ENCODE measurements at regions of chr7 and their contacts with region 1.

Region 1: DNA sequence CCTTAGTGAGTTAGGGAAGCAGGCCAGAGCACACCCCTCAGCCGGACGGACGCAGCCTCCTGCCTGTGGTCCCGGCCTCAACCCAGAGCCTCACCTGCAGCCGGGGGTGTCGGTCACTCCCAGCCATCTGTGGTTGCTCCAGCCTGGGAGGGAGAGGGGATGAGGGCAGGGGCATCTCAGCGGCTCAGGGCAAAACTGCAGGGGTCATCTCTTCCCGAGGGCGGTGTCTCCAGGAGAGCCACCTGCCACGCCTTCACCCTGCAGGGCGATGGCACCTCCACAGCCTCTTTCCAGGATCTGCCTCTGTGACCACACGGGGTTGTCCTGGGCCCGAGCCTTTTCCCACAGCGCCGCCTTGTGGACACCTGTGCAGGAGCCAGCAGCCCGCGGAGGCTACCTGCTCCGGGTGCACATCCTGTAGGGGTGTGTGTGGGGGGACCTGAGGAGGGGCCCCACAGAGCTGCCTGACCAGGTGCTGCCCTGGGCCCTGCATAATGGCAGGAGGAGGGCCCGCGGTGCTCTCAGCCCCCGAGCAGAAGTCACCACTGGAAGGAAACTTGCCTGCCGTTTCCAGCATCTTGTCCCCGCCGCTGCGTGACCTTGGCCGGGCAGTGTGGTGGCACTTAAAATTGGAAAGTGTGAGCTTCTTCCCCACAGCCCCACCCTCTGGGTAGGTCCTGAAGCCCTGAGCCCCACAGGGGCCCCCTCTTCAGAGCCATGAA is 21.6 kb upstream of the AP5Z1 start:
- DNase-seq: no peak
- H3K4me3 ChIP-seq: no peak overlapping the region
- H3K27ac ChIP-seq: peak overlapping the region; percentile 16
- H3K4me1 ChIP-seq: peaks cover 20% of the 10 kb centered on the region
- H3K27me3 ChIP-seq: no peaks in the 10 kb centered on the region
- CTCF ChIP-seq: peak; percentile 83 to 89 (median 85)
- POLR2A ChIP-seq: no peak

Region 2: DNA sequence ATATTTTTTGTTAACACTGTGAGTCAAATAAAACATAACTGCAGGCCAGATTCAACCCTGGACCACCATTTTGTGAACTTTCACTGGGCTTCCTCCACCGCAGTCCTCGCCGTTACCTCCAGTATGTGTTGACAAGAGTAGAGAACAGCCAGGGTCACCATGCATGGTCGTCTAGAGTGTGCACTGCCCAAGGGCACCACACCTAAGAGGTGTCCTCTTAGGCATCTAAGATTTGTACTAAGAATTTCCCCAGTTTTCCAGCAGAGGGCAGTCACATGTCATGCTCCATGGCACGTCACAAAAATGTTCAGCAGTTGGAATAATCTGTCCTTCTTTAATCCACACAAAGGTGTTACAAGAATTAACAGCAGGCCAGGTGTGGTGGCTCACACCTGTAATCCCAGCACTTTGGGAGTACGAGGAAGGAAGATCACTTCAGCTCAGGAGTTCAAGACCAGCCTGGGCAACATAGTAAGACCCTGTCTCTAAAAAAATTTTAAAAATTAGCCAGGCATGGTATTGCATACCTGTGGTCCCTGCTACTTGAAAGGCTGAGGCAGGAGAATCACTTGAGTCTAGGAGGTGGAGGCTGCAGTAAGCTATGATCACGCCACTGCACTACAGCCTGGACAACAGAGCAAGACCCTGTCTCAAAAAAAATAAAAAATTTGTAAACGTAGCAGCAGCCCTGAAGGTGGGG is 143.0 kb before region 1 on chr7:
- intact Hi-C with region 1: loop called (anchors 10 kb)
- DNase-seq: no peak
- H3K4me3 ChIP-seq: no peak overlapping the region
- H3K27ac ChIP-seq: no peak overlapping the region
- H3K4me1 ChIP-seq: peaks cover 13% of the 10 kb centered on the region
- H3K27me3 ChIP-seq: no peaks in the 10 kb centered on the region
- CTCF ChIP-seq: peak; percentile 63 to 93 (median 72)
- POLR2A ChIP-seq: no peak

Region 3: DNA sequence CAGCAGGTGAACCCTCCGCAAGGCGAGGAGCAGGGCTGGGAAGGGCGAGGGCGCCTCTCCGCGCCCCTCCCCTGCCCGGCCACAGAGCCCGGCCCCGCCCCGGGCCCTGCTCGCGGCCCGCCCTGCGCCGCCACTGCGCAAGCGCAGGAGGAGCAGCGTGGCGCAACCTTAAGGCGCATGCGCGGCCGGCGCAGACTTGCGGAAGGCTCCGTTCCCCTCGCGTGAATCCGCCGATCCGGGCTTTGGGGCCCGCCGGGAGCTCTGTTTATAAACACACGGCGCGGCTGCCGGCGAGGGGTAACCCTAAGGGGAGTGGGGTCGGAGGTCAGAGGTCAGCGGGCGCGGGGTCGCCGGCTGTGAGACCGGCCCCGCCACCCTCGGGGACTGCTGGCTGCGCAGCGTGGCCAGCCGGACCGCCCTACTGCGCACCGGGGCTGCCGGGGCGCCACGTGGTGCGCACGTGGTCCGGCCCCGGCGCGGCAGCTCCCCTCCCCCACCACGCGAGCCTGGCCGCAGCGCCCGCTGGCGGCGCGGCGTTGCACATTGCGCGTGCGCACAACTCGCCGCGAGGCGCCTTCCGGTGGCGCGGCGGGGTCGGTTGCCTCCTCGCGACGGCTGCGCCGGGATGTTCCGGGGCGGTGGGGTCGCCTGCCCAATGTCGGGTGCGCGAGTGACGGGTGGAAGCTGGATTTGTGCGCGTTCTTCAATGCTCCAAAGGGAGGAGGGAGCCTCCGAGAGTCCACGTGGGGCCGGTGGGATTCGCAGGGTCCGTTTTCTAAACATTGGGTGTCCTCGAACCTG is 112.0 kb before region 1 on chr7:
- intact Hi-C with region 1: loop called (anchors 5 kb)
- DNase-seq: no peak
- H3K4me3 ChIP-seq: peak overlapping the region; percentile 60
- H3K27ac ChIP-seq: peak overlapping the region; percentile 86
- H3K4me1 ChIP-seq: peaks cover 16% of the 10 kb centered on the region
- H3K27me3 ChIP-seq: no peaks in the 10 kb centered on the region
- CTCF ChIP-seq: peak in 2 of 3 experiments; percentile 20 to 41
- POLR2A ChIP-seq: peak in 1 of 2 donors; percentile 75

Region 4: DNA sequence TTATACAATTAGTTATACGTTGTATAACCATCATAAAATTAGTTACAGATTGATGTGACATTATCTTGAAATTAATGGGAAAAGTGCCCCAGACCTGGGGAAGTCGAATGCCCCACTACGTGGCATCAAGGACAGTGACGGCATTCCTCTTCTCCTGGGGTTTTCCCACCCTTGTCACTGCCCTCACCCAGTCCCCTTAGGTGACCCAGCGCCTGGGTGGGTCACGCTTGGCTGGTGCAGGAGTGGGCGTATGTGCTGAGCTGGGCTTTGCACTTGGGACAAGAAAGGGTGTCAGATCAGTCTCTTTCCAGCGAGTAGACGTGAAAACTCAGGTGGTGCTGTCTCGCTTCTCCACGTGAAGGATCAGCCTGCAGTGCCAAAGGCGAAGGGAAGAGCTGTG is 64.2 kb before region 1 on chr7:
- intact Hi-C with region 1: loop called (anchors 5 kb)
- DNase-seq: no peak
- H3K4me3 ChIP-seq: peak overlapping the region; percentile 22 to 25
- H3K27ac ChIP-seq: peak overlapping the region; percentile 69
- H3K4me1 ChIP-seq: peaks cover 88% of the 10 kb centered on the region
- H3K27me3 ChIP-seq: no peaks in the 10 kb centered on the region
- CTCF ChIP-seq: no peak
- POLR2A ChIP-seq: no peak